ENCODE measurements at regions of chr13 and their contacts with region 1.

Region 1: DNA sequence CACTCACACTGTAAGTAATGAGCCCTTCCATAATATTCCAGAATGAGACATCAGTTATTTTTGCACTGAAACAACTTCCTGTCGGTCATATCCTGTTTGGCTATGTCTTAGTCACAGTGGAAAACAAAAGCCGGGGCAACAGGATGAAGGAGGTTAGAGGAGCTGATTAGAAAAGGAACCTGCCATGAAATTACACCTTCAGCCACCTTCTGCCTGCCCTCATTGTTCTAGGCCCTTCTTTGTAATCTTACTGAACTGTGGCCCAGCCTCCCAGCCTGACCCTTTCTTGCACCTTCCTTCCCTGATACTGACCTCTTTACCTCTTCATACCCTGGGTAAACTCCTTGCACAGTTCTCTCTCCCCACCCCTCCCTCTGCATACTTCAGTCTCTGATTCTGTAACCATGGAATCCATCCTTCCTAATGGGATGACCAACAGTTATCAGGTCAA is 67.3 kb downstream of the DOCK9 start:
- DNase-seq: peak; percentile 98
- H3K4me3 ChIP-seq: no peak overlapping the region
- H3K27ac ChIP-seq: peak overlapping the region; percentile 99
- H3K4me1 ChIP-seq: peaks cover 59% of the 10 kb centered on the region
- H3K27me3 ChIP-seq: no peaks in the 10 kb centered on the region
- CTCF ChIP-seq: no peak
- POLR2A ChIP-seq: peak; percentile 63

Region 2: DNA sequence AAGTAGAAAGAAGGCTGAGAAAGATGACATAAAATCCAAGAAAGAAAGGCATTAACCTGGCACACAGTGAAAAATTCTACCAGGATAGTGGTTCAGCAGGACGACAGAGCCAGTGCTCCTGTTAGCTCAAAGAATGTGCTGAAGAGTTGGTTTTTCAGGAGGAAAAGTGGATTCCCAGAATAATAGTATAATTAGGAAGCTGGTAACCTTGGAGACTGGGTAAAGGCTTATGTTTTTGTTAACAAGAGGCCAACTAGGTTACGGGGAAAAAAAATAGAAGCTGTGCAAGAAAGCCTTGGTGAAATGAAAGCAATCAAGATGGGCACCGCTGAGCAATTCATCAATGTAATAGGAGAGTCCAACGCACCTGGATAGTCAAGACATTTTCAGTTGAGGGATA is 212.7 kb before region 1 on chr13:
- CTCF ChIA-PET with region 1: no interaction called
- POLR2A ChIA-PET with region 1: no interaction called
- dilution Hi-C with region 1: no loop called
- intact Hi-C with region 1: no loop called
- DNase-seq: no peak
- H3K4me3 ChIP-seq: no peak overlapping the region
- H3K27ac ChIP-seq: no peak overlapping the region
- H3K4me1 ChIP-seq: no peaks in the 10 kb centered on the region
- H3K27me3 ChIP-seq: peaks cover 5 to 16% of the 10 kb centered on the region in 2 experiments
- CTCF ChIP-seq: no peak
- POLR2A ChIP-seq: no peak

Region 3: DNA sequence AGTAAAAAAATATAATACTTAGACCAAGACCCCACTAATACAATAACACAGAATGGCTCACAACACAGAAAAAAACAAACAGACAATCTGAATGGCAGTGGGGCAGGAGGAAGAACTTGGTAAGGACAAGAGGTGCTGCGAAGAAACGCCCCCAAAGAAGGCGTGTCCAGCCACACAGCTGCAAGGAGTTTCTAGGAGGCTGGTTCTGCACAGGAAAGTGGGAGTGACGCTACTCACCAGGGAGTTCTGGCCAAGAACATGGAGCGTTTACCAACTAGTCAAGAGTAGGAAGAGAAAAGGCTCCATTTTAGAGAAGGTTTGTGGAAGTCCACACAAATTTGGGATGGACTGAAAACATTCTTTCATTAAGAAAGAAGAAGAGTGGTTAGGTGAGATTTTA is 62.7 kb before region 1 on chr13:
- CTCF ChIA-PET with region 1: no interaction called
- POLR2A ChIA-PET with region 1: no interaction called
- dilution Hi-C with region 1: no loop called
- intact Hi-C with region 1: no loop called
- DNase-seq: no peak
- H3K4me3 ChIP-seq: no peak overlapping the region
- H3K27ac ChIP-seq: no peak overlapping the region
- H3K4me1 ChIP-seq: peaks cover 4% of the 10 kb centered on the region
- H3K27me3 ChIP-seq: no peaks in the 10 kb centered on the region
- CTCF ChIP-seq: no peak
- POLR2A ChIP-seq: no peak

Region 4: DNA sequence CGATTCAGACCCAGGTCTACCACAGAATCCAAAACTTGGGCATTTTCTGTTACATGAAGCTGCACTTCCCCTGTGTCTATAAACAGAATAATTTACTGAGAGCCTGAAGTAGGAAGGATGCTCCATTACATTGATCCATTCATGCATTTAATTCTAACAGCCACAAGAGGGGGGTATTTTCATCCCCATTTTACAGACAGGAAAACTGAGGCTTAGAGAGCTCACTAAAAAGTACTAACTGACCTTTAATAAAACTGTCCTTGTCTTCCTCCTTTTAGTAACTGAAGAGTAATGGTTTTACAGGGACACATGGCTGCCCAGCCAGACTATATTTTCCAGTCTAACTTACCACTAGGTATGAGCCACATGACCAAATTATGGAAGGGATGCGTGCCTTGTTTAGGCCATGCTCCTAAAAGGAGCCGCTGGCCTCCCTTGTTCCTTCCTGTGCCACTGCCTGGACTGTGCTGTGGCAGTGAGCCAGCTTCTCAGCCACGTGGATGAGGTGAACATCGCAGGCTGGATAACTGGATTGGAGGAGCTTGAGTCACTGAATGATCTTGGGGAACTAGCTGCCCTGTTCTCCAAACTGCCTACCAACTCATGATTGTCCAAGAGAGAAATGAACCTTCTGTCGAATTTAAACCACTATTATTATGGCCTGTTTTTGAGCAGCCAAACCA is 41.0 kb before region 1 on chr13:
- CTCF ChIA-PET with region 1: interaction called, 4 read pairs
- POLR2A ChIA-PET with region 1: no interaction called
- dilution Hi-C with region 1: no loop called
- intact Hi-C with region 1: loop called (anchors 1 kb)
- DNase-seq: peak; percentile 79
- H3K4me3 ChIP-seq: no peak overlapping the region
- H3K27ac ChIP-seq: no peak overlapping the region
- H3K4me1 ChIP-seq: no peaks in the 10 kb centered on the region
- H3K27me3 ChIP-seq: no peaks in the 10 kb centered on the region
- CTCF ChIP-seq: peak in 1 of 2 donors; percentile 14
- POLR2A ChIP-seq: no peak

Region 5: DNA sequence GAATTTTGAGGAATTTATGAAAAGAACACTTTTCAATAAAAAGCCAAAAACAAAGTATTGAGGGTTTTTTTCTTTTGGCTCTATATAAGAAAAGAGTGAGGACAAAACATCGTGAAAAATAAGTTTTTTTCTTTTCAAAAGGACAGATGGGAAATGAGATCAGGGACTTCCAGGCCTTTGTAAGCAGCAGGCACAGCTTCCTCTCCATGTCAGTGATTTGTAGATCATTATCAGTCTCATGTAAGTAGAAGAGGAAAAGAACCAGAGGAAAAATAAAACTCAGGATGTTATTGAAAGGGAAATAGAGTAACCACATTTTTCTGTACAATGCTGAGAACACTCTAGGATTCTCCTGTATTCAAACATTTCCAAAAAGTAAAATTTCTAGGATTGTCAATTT is 37.4 kb after region 1 on chr13:
- CTCF ChIA-PET with region 1: interaction called, 4 read pairs
- POLR2A ChIA-PET with region 1: no interaction called
- dilution Hi-C with region 1: no loop called
- intact Hi-C with region 1: loop called (anchors 1 kb)
- DNase-seq: peak; percentile 75
- H3K4me3 ChIP-seq: no peak overlapping the region
- H3K27ac ChIP-seq: peak overlapping the region; percentile 54
- H3K4me1 ChIP-seq: peaks cover 48% of the 10 kb centered on the region
- H3K27me3 ChIP-seq: no peaks in the 10 kb centered on the region
- CTCF ChIP-seq: no peak
- POLR2A ChIP-seq: no peak

Region 6: GRCh38 chr13:98972627-98973026 is 62.1 kb after region 1 on chr13:
- CTCF ChIA-PET with region 1: interaction called, 8 read pairs
- POLR2A ChIA-PET with region 1: interaction called, 8 read pairs
- dilution Hi-C with region 1: no loop called
- intact Hi-C with region 1: loop called (anchors 1 kb)
- DNase-seq: peak; percentile 93
- H3K4me3 ChIP-seq: peak overlapping the region in 1 of 3 experiments; percentile 10
- H3K27ac ChIP-seq: peak overlapping the region; percentile 97
- H3K4me1 ChIP-seq: peaks cover 66% of the 10 kb centered on the region
- H3K27me3 ChIP-seq: no peaks in the 10 kb centered on the region
- CTCF ChIP-seq: no peak
- POLR2A ChIP-seq: peak; percentile 60

Region 7: GRCh38 chr13:99004978-99005377 is 94.5 kb after region 1 on chr13:
- CTCF ChIA-PET with region 1: no interaction called
- POLR2A ChIA-PET with region 1: no interaction called
- dilution Hi-C with region 1: no loop called
- intact Hi-C with region 1: loop called (anchors 1 kb)
- DNase-seq: peak; percentile 75
- H3K4me3 ChIP-seq: no peak overlapping the region
- H3K27ac ChIP-seq: peak overlapping the region; percentile 30
- H3K4me1 ChIP-seq: peaks cover 39% of the 10 kb centered on the region
- H3K27me3 ChIP-seq: no peaks in the 10 kb centered on the region
- CTCF ChIP-seq: no peak
- POLR2A ChIP-seq: no peak